WTC11 (cell line): ENCODE measurements at regions of chr5 and their contacts with region 1.

Region 1: GRCh38 chr5:79811904-79812303 is 122.3 kb downstream of the CMYA5 start:
- DNase-seq: no peak
- ATAC-seq: no peak
- H3K4me3 Mint-ChIP-seq: no peak overlapping the region
- H3K27ac Mint-ChIP-seq: no peak overlapping the region
- H3K4me1 Mint-ChIP-seq: 0 out of 2 replicates have a peak, but pooled peaks cover 1% of the 10 kb centered on the region
- H3K27me3 Mint-ChIP-seq: no peaks in the 10 kb centered on the region; the same call in 1 of the 2 replicates
- CTCF ChIP-seq: no peak

Region 2: DNA sequence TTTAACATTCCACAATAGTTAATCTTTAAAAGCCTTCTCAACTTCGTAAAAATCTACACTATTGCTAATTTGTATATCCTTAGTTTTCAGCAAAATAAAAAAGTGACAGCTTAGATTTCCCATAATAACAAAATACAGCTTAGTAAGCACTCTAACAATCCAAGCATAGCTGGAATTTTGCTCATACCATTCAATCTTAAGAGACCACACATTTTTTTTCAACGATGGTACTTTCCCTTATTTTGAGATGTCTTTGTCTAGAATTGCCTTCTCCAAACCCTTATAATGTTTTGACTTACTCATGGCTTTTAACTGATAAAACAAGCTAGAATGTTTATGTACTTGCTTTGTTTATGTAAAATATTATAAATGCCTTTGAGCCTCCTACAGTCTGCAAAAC is 363.6 kb before region 1 on chr5:
- CTCF ChIA-PET with region 1: no interaction called
- POLR2A ChIA-PET with region 1: interaction called, 10 read pairs
- DNase-seq: no peak
- ATAC-seq: no peak
- H3K4me3 Mint-ChIP-seq: no peak overlapping the region
- H3K27ac Mint-ChIP-seq: no peak overlapping the region
- H3K4me1 Mint-ChIP-seq: 0 out of 2 replicates have a peak, but pooled peaks cover 3% of the 10 kb centered on the region
- H3K27me3 Mint-ChIP-seq: no peaks in the 10 kb centered on the region
- CTCF ChIP-seq: no peak